Caco-2 (cell line): ENCODE measurements at regions of chr5 and their contacts with region 1.

Region 1: DNA sequence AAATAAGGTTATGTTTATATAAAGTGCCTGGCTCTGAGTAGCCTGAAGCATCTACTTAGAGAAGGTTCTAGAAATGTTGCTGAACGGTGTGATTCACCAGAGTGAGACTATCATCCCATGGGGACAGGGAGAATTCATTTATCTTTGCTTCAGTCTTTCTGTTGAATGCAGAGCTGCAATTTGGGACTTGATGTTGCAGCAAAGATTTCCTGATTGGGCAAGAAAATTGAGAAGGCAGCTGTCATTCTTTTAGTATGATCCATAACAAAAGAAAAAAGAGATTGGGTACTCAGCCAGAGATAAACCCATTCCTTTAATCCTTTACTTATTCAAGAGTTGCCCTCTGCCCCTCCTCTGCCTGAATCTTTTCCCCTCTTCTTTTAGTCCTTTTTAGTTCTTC is 456.3 kb upstream of the WWC1 start:
- DNase-seq: no peak
- H3K4me3 ChIP-seq: no peak overlapping the region
- H3K4me3 Mint-ChIP-seq: no peak overlapping the region
- H3K27ac Mint-ChIP-seq: no peak overlapping the region
- H3K4me1 ChIP-seq: peaks cover 4% of the 10 kb centered on the region; the same call in 1 of the 2 replicates
- H3K4me1 Mint-ChIP-seq: peaks cover 8% of the 10 kb centered on the region
- H3K27me3 ChIP-seq: no peaks in the 10 kb centered on the region
- H3K27me3 Mint-ChIP-seq: no peaks in the 10 kb centered on the region
- CTCF ChIP-seq: no peak

Region 2: GRCh38 chr5:167810573-167810972 is 24.6 kb before region 1 on chr5:
- CTCF ChIA-PET with region 1: no interaction called
- POLR2A ChIA-PET with region 1: no interaction called
- intact Hi-C with region 1: loop called (anchors 1 kb)
- DNase-seq: no peak
- H3K4me3 ChIP-seq: no peak overlapping the region
- H3K4me3 Mint-ChIP-seq: peak overlapping the region; percentile 23
- H3K27ac Mint-ChIP-seq: peak overlapping the region; percentile 17
- H3K4me1 ChIP-seq: peaks cover 47% of the 10 kb centered on the region
- H3K4me1 Mint-ChIP-seq: peaks cover 41% of the 10 kb centered on the region
- H3K27me3 ChIP-seq: no peaks in the 10 kb centered on the region
- H3K27me3 Mint-ChIP-seq: no peaks in the 10 kb centered on the region
- CTCF ChIP-seq: no peak

Region 3: DNA sequence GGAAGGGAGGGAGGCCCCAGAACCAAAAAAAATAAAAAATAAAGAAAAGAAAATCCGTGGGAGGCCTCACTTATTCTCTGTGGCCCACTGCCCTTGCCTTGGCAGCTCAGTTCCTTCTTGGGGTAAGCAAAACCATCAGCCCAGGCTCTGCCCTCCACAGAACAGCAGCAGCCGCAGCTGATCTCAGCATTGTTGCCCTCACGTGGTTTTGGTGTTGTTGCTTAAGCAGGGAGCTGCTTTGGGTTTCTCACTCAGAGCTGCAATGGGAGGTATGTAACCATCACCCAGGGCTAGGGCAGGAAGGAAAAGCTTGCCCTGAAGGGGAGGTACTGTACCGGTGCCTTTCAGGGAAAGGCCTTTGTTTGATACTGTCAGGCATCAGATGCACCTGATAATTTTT is 81.6 kb after region 1 on chr5:
- CTCF ChIA-PET with region 1: no interaction called
- POLR2A ChIA-PET with region 1: no interaction called
- intact Hi-C with region 1: no loop called
- DNase-seq: peak; percentile 30 to 61
- H3K4me3 ChIP-seq: no peak overlapping the region
- H3K4me3 Mint-ChIP-seq: no peak overlapping the region
- H3K27ac Mint-ChIP-seq: no peak overlapping the region
- H3K4me1 ChIP-seq: peaks cover 12% of the 10 kb centered on the region
- H3K4me1 Mint-ChIP-seq: peaks cover 16% of the 10 kb centered on the region
- H3K27me3 ChIP-seq: no peaks in the 10 kb centered on the region
- H3K27me3 Mint-ChIP-seq: peaks cover 11% of the 10 kb centered on the region
- CTCF ChIP-seq: no peak

Region 4: DNA sequence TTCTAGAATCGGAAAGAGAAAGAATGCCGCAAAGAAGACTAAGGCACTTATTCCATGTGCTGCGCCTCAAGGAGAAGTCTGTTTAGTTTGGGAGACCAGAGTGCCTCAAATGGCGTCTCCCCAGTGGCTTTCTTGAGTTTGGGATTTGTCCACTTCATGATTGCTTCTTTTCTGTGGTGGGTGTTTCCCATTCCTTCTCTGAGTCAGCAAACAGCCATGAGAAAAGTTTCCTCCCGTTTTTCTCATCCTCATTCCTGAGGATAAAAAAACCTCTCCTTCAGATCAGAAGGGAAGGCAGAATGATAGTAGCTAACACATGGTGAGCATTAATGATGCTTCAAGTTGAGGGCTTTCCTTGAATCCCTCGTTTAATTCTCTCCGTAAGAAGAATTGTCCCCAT is 180.4 kb after region 1 on chr5:
- CTCF ChIA-PET with region 1: no interaction called
- POLR2A ChIA-PET with region 1: no interaction called
- intact Hi-C with region 1: no loop called
- DNase-seq: no peak
- H3K4me3 ChIP-seq: no peak overlapping the region
- H3K4me3 Mint-ChIP-seq: no peak overlapping the region
- H3K27ac Mint-ChIP-seq: no peak overlapping the region
- H3K4me1 ChIP-seq: no peaks in the 10 kb centered on the region
- H3K4me1 Mint-ChIP-seq: no peaks in the 10 kb centered on the region
- H3K27me3 ChIP-seq: no peaks in the 10 kb centered on the region
- H3K27me3 Mint-ChIP-seq: peaks cover 28% of the 10 kb centered on the region
- CTCF ChIP-seq: no peak